AG04449 (cell line): ENCODE measurements at regions of chr18 and their contacts with region 1.

Region 1: DNA sequence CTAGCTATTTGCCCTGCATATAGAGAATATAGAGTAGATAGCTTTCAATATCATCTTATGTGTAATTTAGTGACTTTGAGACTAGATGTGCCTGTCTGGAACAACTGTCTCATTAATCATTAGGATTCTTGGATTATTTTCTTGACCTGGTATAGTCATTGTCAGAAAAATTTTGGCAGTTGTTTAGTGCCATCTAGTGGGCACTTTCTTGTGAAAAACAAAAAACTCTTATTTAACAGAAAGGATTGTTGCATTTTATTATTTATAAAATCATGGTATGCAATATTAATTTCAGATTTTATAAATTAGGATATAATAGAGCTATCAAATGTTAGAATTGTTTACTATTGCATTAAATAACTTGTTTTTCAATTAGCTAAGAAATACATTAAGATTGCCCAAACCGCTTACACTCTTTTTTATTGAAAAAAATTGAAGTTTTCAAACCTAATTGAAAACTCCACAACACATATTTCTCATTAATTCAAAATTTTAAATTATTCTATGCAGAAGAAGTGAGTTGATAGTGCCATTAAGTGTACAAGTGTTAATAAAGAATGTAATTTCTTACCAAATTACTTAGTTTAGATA is 80.3 kb downstream of the DYNAP start:
- DNase-seq: no peak
- H3K4me3 ChIP-seq: no peak overlapping the region
- CTCF ChIP-seq: peak; percentile 6

Region 2: DNA sequence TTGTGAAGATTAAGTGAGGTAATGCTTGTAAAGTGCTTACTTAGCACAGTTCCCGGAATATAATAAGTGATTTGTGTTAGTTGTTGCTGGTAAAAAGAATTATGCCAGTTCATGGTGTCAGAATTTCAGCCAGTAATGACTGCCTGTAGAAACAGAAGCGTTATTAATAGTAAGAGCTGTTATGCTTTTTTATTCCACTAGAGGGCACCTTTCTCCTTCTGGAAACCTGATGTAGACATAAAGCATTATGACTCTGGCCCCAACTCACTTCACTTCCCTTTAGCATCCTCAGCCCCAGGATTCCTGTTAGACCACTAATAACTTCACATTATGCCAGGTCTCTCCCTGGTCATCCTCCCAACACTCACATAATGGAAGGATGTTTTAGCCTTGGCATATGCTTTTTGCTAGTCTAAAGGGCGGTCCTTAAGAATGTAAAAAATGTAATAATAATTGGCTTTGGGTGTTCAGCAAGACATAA is 278.8 kb before region 1 on chr18:
- CTCF ChIA-PET with region 1: interaction called, 91 read pairs
- POLR2A ChIA-PET with region 1: no interaction called
- DNase-seq: no peak
- H3K4me3 ChIP-seq: no peak overlapping the region
- CTCF ChIP-seq: peak; percentile 60

Region 3: DNA sequence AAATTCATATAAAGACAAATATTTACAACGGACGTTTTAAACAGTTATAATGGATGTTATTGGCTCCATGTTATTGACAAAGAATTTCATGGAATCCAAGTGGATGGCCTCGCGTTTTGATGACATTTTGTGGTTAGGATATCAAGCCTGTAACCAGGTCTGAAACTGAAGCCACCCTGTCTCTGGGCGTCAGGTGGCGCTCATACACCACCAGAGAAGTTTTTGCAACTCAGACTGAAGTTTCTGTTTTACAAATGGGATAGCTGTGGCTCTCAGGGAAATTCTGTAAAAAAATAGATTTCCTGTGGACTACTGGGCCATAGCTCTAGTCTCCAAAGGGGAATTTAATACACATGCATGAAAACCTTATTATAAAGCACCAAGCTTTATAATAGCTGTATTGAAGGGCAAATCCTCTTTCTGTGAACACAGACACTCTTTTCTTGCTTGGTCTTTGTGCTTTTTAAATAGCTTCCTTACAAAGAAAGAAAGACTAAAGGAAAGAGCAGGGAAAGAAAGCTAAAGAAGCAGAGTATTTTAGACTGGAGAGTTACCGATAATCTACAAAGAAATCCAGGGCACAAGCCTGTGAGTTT is 227.0 kb before region 1 on chr18:
- CTCF ChIA-PET with region 1: interaction called, 125 read pairs
- POLR2A ChIA-PET with region 1: no interaction called
- DNase-seq: peak; percentile 9
- H3K4me3 ChIP-seq: no peak overlapping the region
- CTCF ChIP-seq: peak; percentile 77

Region 4: DNA sequence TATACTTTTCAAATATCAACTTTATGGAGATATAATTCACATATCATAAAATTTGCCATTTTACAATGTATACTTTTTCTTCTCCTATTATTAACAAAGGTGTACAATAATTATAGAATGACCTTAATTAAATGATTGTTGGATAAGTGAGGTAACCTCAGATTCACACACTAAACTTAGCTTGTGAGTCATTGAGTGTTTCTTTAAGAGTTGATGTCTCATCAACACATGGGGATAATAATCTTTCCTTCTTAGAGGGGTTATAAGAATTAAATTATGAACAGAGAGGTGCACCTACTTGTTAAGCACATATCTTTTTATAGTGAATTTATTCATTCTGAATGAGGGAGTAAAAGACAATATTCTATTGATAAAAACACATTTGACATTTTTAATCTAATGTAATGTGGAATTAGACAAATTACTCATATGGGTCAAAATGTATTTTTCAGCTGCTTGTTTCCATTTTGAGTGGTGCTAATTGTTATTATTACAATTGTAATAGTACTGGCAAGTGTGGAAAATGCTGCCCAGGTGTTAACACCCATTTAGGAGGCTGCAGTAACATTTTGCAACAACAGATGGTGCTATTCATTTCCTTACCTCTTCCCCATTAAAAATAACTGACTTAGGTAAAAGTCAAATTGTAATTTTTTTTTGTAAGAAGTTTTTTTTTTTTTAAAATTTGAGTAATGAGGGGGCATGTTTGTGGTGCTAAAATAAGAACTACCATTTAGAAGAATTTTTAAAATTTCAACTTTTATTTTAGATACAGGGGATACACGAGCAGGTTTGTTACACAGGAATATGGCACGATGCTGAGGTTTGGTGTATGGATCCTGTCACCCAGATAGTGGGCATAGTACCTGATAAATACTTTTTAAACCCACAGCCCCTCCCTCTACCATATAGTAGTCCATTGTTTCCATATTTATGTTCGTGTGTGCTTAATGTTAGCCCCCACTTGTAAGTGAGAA is 112.5 kb before region 1 on chr18:
- CTCF ChIA-PET with region 1: interaction called, 12 read pairs
- POLR2A ChIA-PET with region 1: no interaction called
- DNase-seq: no peak
- H3K4me3 ChIP-seq: no peak overlapping the region
- CTCF ChIP-seq: peak; percentile 38

Region 5: GRCh38 chr18:54684784-54685183 is 13.4 kb after region 1 on chr18:
- CTCF ChIA-PET with region 1: interaction called, 22 read pairs
- POLR2A ChIA-PET with region 1: no interaction called
- DNase-seq: no peak
- H3K4me3 ChIP-seq: no peak overlapping the region
- CTCF ChIP-seq: no peak

Region 6: GRCh38 chr18:54916507-54916906 is 245.1 kb after region 1 on chr18:
- CTCF ChIA-PET with region 1: no interaction called
- POLR2A ChIA-PET with region 1: no interaction called
- DNase-seq: no peak
- H3K4me3 ChIP-seq: no peak overlapping the region
- CTCF ChIP-seq: no peak

Region 7: GRCh38 chr18:54983041-54983686 is 311.8 kb after region 1 on chr18:
- CTCF ChIA-PET with region 1: interaction called, 149 read pairs
- POLR2A ChIA-PET with region 1: no interaction called
- DNase-seq: no peak
- H3K4me3 ChIP-seq: no peak overlapping the region
- CTCF ChIP-seq: peak; percentile 51

Region 8: DNA sequence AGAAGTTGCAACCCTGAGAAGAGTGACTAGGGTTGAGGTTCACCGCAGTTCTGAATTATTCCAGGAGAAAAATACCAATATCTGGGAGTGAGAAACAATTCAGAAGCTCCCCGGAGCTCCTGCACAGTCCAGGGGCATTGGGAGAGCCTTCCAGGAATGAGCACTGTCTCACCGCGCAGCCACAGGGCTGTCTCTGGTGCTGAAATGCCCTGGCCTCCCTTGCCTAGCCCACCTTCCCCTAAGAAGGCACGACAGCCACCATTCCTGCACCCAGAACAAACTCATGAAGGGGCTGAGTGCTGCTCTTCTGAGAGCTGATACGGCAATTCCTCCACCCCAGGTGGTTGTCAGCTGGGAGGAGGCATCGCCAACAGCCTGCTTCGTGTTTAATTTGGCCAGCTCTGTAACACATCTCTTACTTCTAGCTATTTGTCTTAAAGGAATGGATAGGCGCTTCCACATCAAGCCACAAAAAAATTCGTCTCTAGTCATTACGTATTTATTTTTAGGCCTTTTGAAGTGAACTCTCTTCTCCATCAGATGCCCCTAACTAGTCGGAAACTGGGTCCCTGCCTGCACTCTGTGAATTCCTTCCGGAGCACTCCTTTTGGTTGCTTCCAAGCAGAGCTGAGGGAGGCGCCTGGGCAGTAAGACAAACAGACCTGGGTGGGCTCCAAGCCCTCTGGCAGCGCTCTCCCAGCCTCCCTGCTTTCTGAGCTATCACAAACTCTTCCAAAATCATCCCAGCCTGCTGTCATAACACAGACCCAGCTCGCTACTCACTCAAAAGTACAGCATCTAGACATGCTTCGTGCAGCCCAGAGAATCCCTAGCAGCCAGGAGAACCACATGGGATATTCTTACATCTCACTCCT is 408.3 kb after region 1 on chr18:
- CTCF ChIA-PET with region 1: no interaction called
- POLR2A ChIA-PET with region 1: no interaction called
- DNase-seq: no peak
- H3K4me3 ChIP-seq: no peak overlapping the region
- CTCF ChIP-seq: no peak